ENCODE measurements at regions of chr16 and their contacts with region 1.

Region 1: DNA sequence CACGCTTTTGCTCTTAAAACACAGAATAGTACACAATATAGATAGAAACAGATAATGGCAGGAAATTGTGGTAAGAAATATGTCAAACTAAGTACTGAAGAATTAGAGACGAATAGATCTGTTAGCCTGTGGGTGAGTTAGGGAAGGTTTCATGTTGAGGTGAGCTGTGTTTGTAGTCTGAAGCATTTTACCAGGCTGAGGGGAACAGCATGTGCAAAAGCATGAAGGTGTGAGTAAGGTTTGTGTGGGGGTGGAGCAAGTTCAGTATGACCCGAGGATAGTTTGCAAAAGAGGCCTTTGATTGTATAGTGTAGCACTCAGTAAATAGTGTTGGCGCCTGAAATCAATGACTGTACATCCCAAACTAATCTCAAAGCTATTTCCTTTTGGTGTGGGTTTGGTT is 13.8 kb downstream of the IGSF6 start:
- DNase-seq: peak; percentile 91
- H3K4me3 ChIP-seq: no peak overlapping the region
- H3K27ac ChIP-seq: peak overlapping the region; percentile 84
- H3K4me1 ChIP-seq: peaks cover 25% of the 10 kb centered on the region
- H3K27me3 ChIP-seq: no peaks in the 10 kb centered on the region
- CTCF ChIP-seq: no peak

Region 2: GRCh38 chr16:21685034-21685455 is 46.5 kb after region 1 on chr16:
- CTCF ChIA-PET with region 1: no interaction called
- dilution Hi-C with region 1: loop called (anchors 5 kb)
- in situ Hi-C with region 1: no loop called
- intact Hi-C with region 1: no loop called
- DNase-seq: no peak
- H3K4me3 ChIP-seq: no peak overlapping the region
- H3K27ac ChIP-seq: no peak overlapping the region
- H3K4me1 ChIP-seq: no peaks in the 10 kb centered on the region
- H3K27me3 ChIP-seq: no peaks in the 10 kb centered on the region
- CTCF ChIP-seq: no peak